Mammary epithelial cell (primary cell): ENCODE measurements at regions of chr19 and their contacts with region 1.

Region 1: DNA sequence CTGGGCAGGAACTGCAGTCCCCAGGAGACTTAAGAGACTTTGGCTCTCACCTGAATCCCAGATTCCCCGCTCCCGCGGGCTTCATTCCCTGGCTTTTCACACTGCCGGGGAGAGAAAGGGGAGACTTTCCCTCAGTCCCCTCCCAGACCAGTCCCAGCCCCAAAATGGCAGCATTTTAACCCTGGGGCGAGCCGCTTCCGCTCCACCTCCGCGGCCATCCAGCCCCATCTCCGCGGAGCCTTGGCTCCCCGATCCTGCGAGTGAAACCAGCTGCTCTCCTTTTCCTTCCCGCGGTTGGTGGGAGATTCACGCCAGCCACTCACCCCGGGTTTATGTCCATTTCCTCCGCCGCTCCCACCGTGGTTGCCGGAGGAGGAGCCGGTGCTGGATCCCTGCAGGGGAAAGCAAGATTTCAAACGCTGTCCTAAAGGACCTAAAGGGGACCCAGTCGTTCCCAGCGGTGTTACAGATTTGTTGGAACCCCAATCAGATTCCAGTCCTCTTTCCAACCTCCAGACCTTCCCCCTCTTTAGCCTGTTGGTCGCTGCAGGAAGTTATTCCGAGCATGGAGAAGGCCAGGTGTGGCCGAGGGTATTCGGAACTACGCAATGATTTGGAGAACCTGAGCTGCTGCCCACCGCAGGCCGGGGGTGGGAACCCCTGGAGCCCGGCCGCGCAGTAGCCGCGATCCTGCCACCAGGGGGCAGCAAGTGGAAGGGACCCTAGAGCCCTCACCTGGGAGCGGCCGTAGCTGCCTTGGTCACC is 3.4 kb downstream of the DMKN start:
- DNase-seq: peak; percentile 82
- H3K4me3 ChIP-seq: peak overlapping the region; percentile 52 to 75 (median 75)
- H3K27ac ChIP-seq: peak overlapping the region; percentile 95
- H3K4me1 ChIP-seq: peaks cover 21% of the 10 kb centered on the region
- H3K27me3 ChIP-seq: no peaks in the 10 kb centered on the region
- CTCF ChIP-seq: peak; percentile 88 to 98

Region 2: DNA sequence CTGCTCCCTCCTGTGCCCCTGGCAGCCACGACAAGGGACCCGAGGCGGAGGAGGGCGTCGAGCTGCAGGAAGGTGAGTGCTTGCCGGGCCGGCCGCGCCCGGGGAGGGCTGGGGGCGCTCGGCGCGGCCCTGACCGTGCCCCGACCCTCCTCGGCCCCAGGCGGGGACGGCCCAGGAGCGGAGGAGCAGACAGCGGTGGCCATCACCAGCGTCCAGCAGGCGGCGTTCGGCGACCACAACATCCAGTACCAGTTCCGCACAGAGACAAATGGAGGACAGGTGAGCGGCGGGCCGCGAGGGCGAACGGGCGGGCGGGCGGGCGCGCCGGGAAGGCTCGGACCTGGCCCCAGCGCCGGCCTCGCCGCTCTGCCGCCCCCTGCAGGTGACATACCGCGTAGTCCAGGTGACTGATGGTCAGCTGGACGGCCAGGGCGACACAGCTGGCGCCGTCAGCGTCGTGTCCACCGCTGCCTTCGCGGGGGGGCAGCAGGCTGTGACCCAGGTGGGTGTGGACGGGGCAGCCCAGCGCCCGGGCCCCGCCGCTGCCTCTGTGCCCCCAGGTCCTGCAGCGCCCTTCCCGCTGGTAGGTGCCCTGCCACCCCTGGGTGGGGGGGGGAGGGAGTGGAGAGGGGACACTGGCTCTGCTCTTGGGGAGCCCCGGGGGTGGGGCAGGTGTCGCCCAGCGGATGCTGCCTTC is 240.5 kb before region 1 on chr19:
- CTCF ChIA-PET with region 1: interaction called, 5 read pairs
- dilution Hi-C with region 1: no loop called
- in situ Hi-C with region 1: no loop called
- intact Hi-C with region 1: loop called (anchors 2 kb)
- DNase-seq: peak; percentile 70
- H3K4me3 ChIP-seq: peak overlapping the region; percentile 15 to 72 (median 62)
- H3K27ac ChIP-seq: no peak overlapping the region
- H3K4me1 ChIP-seq: peaks cover 37% of the 10 kb centered on the region
- H3K27me3 ChIP-seq: no peaks in the 10 kb centered on the region
- CTCF ChIP-seq: peak; percentile 26 to 61

Region 3: GRCh38 chr19:35462476-35462953 is 47.5 kb before region 1 on chr19:
- CTCF ChIA-PET with region 1: no interaction called
- dilution Hi-C with region 1: no loop called
- in situ Hi-C with region 1: no loop called
- intact Hi-C with region 1: no loop called
- DNase-seq: no peak
- H3K4me3 ChIP-seq: no peak overlapping the region
- H3K27ac ChIP-seq: no peak overlapping the region
- H3K4me1 ChIP-seq: no peaks in the 10 kb centered on the region
- H3K27me3 ChIP-seq: no peaks in the 10 kb centered on the region
- CTCF ChIP-seq: no peak

Region 4: GRCh38 chr19:35557539-35558399 is 47.7 kb after region 1 on chr19:
- CTCF ChIA-PET with region 1: no interaction called
- dilution Hi-C with region 1: no loop called
- in situ Hi-C with region 1: no loop called
- intact Hi-C with region 1: no loop called
- DNase-seq: peak; percentile 52
- H3K4me3 ChIP-seq: peak overlapping the region; percentile 36 to 44 (median 43)
- H3K27ac ChIP-seq: no peak overlapping the region
- H3K4me1 ChIP-seq: peaks cover 10% of the 10 kb centered on the region
- H3K27me3 ChIP-seq: no peaks in the 10 kb centered on the region
- CTCF ChIP-seq: no peak

Region 5: GRCh38 chr19:35592226-35592625 is 82.2 kb after region 1 on chr19:
- CTCF ChIA-PET with region 1: no interaction called
- dilution Hi-C with region 1: no loop called
- in situ Hi-C with region 1: no loop called
- intact Hi-C with region 1: loop called (anchors 1 kb)
- DNase-seq: peak; percentile 24
- H3K4me3 ChIP-seq: no peak overlapping the region
- H3K27ac ChIP-seq: no peak overlapping the region
- H3K4me1 ChIP-seq: no peaks in the 10 kb centered on the region
- H3K27me3 ChIP-seq: no peaks in the 10 kb centered on the region
- CTCF ChIP-seq: peak; percentile 39 to 76

Region 6: GRCh38 chr19:35628565-35629331 is 118.7 kb after region 1 on chr19 and contains the start of gene RBM42:
- CTCF ChIA-PET with region 1: no interaction called
- dilution Hi-C with region 1: no loop called
- in situ Hi-C with region 1: no loop called
- intact Hi-C with region 1: loop called (anchors 1 kb)
- DNase-seq: peak; percentile 99
- H3K4me3 ChIP-seq: peak within 1 kb of the TSS; percentile 80 to 100 (median 82)
- H3K27ac ChIP-seq: peak within 1 kb of the TSS; percentile 82
- H3K4me1 ChIP-seq: peaks cover 10% of the 10 kb centered on the region
- H3K27me3 ChIP-seq: no peaks in the 10 kb centered on the region
- CTCF ChIP-seq: no peak
- total RNA-seq, gene RBM42: 40.2 to 78.5 TPM

Region 7: DNA sequence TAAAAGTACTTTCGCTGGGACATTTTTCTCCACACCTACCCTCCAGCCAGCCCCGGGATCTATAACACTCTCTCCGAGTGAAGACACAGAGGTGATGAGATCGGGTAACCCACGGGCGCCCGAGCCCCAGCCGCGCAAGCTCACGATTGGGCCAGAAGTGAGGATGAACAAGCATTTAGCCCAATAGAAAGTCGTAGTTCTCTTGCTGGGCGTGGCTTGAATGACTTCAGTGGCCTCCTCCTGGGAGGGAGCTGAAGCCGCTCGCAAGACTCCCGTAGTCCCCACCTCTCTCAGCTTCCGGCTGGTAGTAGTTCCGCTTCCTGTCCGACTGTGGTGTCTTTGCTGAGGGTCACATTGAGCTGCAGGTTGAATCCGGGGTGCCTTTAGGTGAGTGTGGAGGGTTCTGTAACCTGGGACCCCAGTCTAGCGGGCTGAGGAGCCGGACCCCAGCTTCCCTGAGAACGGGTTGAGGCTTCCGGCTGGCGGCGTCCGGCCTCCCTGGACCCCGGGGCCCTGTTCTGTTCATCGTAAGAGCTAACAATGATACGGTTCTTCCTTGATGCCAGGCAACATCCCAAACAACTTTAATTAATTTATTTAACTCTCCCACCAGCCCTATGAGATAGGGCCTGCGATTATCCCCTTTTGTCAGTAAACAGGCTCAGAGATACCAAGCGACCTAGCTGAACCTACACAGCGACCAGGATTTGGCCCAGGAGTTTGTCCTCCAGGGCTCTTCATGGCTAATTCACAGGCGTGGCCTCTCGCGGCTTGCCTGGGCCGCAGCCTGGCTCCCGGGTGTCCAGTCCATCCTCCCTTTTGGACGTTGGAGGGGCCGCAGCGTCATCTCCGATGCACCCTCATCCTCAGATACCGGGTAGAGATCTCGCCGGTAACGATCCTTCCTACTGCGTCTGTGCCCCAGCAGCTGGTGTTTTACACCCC is 138.2 kb after region 1 on chr19 and contains the start of gene COX6B1:
- CTCF ChIA-PET with region 1: interaction called, 4 read pairs
- dilution Hi-C with region 1: no loop called
- in situ Hi-C with region 1: no loop called
- intact Hi-C with region 1: loop called (anchors 1 kb)
- DNase-seq: peak; percentile 96
- H3K4me3 ChIP-seq: peak within 1 kb of the TSS; percentile 63 to 85 (median 76)
- H3K27ac ChIP-seq: peak within 1 kb of the TSS; percentile 66
- H3K4me1 ChIP-seq: peaks cover 16% of the 10 kb centered on the region
- H3K27me3 ChIP-seq: no peaks in the 10 kb centered on the region
- CTCF ChIP-seq: no peak
- total RNA-seq, gene COX6B1: 201 to 275 TPM